MCF 10A (cell line): ENCODE measurements at regions of chr11 and their contacts with region 1.

Region 1: GRCh38 chr11:105044921-105045524 is at the start of gene CARD16:
- DNase-seq: peak; percentile 83
- H3K4me3 Mint-ChIP-seq: peak within 1 kb of the TSS; percentile 78
- H3K27ac Mint-ChIP-seq: peak within 1 kb of the TSS; percentile 93
- H3K4me1 Mint-ChIP-seq: peaks cover 64% of the 10 kb centered on the region
- H3K27me3 Mint-ChIP-seq: no peaks in the 10 kb centered on the region
- CTCF ChIP-seq: no peak
- total RNA-seq, gene CARD16: 14.0 and 14.4 TPM in 2 replicates

Region 2: DNA sequence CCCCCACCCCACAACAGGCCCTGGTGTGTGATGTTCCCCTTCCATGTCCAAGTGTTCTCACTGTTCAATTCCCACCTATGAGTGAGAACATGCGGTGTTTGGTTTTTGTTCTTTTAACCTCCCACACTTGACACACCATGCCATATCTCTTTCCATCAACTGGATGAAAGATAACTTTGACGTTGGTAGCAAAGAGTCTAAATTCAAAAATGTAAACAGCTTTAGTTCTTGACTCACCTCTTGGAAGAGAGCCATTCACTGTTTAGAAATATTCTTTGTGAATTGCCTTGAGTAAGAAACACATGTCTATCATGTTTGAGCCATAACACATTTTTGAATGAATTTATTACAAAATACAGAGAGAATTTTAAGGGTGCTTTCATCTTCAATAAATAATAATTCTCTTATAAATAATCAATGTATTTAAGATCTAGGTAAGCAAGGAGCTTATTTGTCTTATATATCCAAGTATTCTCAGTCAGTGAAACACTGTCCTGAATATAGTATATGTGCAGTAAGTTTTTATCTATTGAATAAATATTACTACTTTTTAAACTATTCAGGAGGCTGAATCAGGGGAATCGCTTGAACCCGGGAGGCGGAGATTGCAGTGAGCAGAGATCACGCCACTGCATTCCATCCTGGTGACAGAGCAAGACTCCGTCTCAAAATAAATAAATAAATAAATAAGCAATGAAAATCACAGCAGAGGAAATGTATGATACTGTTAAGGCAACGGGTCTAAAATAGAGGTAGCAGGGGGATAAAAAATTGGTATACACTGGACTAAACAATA is 87.9 kb after region 1 on chr11:
- CTCF ChIA-PET with region 1: no interaction called
- POLR2A ChIA-PET with region 1: no interaction called
- intact Hi-C with region 1: loop called (anchors 10 kb)
- DNase-seq: peak; percentile 93
- H3K4me3 Mint-ChIP-seq: peak overlapping the region; percentile 5
- H3K27ac Mint-ChIP-seq: peak overlapping the region; percentile 84
- H3K4me1 Mint-ChIP-seq: peaks cover 21% of the 10 kb centered on the region
- H3K27me3 Mint-ChIP-seq: no peaks in the 10 kb centered on the region
- CTCF ChIP-seq: no peak